MCF 10A (cell line): ENCODE measurements at regions of chr19 and their contacts with region 1.

Region 1: GRCh38 chr19:15332311-15332996 is at the start of gene BRD4:
- DNase-seq: peak; percentile 52
- H3K4me3 Mint-ChIP-seq: peak within 1 kb of the TSS; percentile 97
- H3K27ac Mint-ChIP-seq: peak within 1 kb of the TSS; percentile 91
- H3K4me1 Mint-ChIP-seq: peaks cover 9% of the 10 kb centered on the region
- H3K27me3 Mint-ChIP-seq: no peaks in the 10 kb centered on the region
- CTCF ChIP-seq: no peak
- total RNA-seq, gene BRD4: 167 and 189 TPM in 2 replicates

Region 2: GRCh38 chr19:15297416-15298224 is 34.8 kb before region 1 on chr19:
- CTCF ChIA-PET with region 1: interaction called, 4 read pairs
- POLR2A ChIA-PET with region 1: interaction called, 13 read pairs
- intact Hi-C with region 1: loop called (anchors 2 kb)
- DNase-seq: peak; percentile 67
- H3K4me3 Mint-ChIP-seq: peak overlapping the region; percentile 21
- H3K27ac Mint-ChIP-seq: peak overlapping the region; percentile 87
- H3K4me1 Mint-ChIP-seq: peaks cover 63% of the 10 kb centered on the region
- H3K27me3 Mint-ChIP-seq: no peaks in the 10 kb centered on the region
- CTCF ChIP-seq: peak; percentile 11